ENCODE measurements at regions of chr15 and their contacts with region 1.

Region 1: DNA sequence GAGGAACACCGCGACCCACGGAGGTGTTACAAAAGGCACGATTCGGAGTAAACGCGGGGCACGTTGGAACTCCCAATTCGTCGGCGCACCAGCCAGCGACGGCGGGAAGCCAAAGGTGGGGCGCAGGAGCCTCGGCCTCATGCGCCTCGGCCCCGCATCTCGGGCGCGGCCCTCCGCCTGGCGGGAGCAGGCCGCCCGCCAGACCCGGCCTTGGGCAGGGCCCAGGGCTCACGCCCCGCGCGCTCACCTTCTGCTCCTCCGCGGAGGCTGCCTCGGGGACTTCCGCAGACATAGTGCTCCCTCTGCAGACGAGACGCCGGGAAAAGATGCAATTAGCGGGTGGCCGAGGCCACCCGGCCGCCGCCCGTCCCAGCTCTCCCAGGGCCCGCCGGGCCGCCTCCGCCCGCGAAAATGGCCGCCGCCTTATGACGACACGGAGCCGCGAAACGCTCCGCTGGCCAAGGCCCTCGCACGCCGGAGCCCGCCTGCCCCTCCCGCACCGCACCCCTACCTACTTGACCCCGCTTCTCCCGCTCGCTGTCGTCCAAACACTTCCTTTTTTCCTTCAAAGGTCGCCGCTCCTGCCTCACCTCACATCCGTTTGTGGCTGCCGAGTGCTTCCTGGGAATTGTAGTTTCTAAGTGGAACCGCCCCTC is at the start of gene ARPP19:
- DNase-seq: peak; percentile 97
- H3K4me3 ChIP-seq: peak within 1 kb of the TSS; percentile 61 to 85 (median 80)
- H3K27ac ChIP-seq: peak within 1 kb of the TSS; percentile 91 to 97 (median 96)
- H3K4me1 ChIP-seq: peaks cover 0 to 45% (median 41%) of the 10 kb centered on the region in 4 donors
- H3K27me3 ChIP-seq: no peaks in the 10 kb centered on the region
- CTCF ChIP-seq: no peak
- EP300 ChIP-seq: no peak
- POLR2A ChIP-seq: peak; percentile 38 to 80
- total RNA-seq, gene ARPP19: 110 to 177 (median 150) TPM

Region 2: DNA sequence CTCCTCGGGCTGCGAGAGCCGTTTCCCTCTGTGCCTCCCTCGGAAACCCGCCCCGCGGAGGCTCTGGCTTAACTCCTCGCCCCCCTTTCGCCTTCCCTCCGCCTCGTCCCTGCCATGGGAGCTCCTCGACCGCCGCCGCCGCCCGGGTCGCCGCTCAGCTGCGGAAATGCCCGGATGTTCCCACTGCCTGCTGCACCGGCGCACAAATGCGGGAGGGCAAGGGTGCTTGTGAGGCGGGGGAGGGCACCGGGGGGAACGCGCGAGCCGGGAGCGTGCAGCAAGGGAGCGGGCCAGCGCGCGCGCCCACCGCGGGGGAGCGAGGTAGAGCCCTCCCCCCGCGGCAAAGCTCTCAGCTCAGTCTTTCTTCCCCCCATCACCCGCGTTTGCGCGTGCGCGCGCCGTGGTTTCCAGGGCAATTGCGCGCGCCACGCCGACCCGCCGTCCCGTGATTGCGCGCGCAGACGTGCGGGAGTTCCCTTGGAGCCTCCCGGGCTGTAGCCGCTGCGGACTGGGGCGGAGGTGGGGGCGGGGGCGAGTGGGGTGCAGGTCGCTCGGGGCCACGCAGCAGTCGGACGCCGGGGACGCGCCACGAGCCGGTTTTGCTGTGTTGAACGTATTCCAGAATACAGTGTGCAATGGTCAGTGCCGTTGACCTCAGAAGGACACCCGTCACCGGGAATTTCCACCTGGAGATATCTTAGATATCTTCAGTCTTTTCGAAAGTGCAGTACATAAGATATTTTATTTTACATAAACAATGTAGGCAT is 945.9 kb before region 1 on chr15 and contains the start of gene DMXL2:
- intact Hi-C with region 1: loop called (anchors 5 kb)
- DNase-seq: peak; percentile 93
- H3K4me3 ChIP-seq: peak within 1 kb of the TSS; percentile 60 to 79 (median 72)
- H3K27ac ChIP-seq: peak within 1 kb of the TSS; percentile 84 to 91 (median 84)
- H3K4me1 ChIP-seq: peaks cover 0 to 18% (median 15%) of the 10 kb centered on the region in 4 donors
- H3K27me3 ChIP-seq: no peaks in the 10 kb centered on the region
- CTCF ChIP-seq: no peak
- EP300 ChIP-seq: no peak
- POLR2A ChIP-seq: no peak
- total RNA-seq, gene DMXL2: 34.6 to 64.5 (median 50.5) TPM

Region 3: GRCh38 chr15:52261498-52262242 is 307.1 kb before region 1 on chr15:
- intact Hi-C with region 1: loop called (anchors 5 kb)
- DNase-seq: peak; percentile 73
- H3K4me3 ChIP-seq: no peak overlapping the region
- H3K27ac ChIP-seq: peak overlapping the region; percentile 44 to 81 (median 52)
- H3K4me1 ChIP-seq: peaks cover 2 to 15% (median 13%) of the 10 kb centered on the region in 4 donors
- H3K27me3 ChIP-seq: no peaks in the 10 kb centered on the region
- CTCF ChIP-seq: peak in 1 of 4 experiments; percentile 22
- EP300 ChIP-seq: no peak
- POLR2A ChIP-seq: no peak

Region 4: GRCh38 chr15:52509500-52510245 is 59.1 kb before region 1 on chr15:
- intact Hi-C with region 1: no loop called
- DNase-seq: no peak
- H3K4me3 ChIP-seq: no peak overlapping the region
- H3K27ac ChIP-seq: no peak overlapping the region
- H3K4me1 ChIP-seq: peaks cover 0 to 25% (median 11%) of the 10 kb centered on the region in 4 donors
- H3K27me3 ChIP-seq: no peaks in the 10 kb centered on the region
- CTCF ChIP-seq: no peak
- EP300 ChIP-seq: no peak
- POLR2A ChIP-seq: no peak

Region 5: GRCh38 chr15:52528991-52529926 is 39.5 kb before region 1 on chr15:
- intact Hi-C with region 1: loop called (anchors 2 kb)
- DNase-seq: peak; percentile 84
- H3K4me3 ChIP-seq: peak overlapping the region; percentile 36 to 91 (median 78)
- H3K27ac ChIP-seq: peak overlapping the region; percentile 83 to 89 (median 88)
- H3K4me1 ChIP-seq: peaks cover 0 to 20% (median 9%) of the 10 kb centered on the region in 4 donors
- H3K27me3 ChIP-seq: no peaks in the 10 kb centered on the region
- CTCF ChIP-seq: no peak
- EP300 ChIP-seq: no peak
- POLR2A ChIP-seq: no peak

Region 6: GRCh38 chr15:52679232-52680040 is 110.7 kb after region 1 on chr15 and contains the start of gene ATOSA:
- intact Hi-C with region 1: loop called (anchors 1 kb)
- DNase-seq: peak; percentile 96
- H3K4me3 ChIP-seq: peak within 1 kb of the TSS; percentile 66 to 98 (median 93)
- H3K27ac ChIP-seq: peak within 1 kb of the TSS; percentile 89 to 100 (median 98)
- H3K4me1 ChIP-seq: peaks cover 0 to 44% (median 36%) of the 10 kb centered on the region in 4 donors
- H3K27me3 ChIP-seq: no peaks in the 10 kb centered on the region
- CTCF ChIP-seq: no peak
- EP300 ChIP-seq: no peak
- POLR2A ChIP-seq: peak; percentile 55
- total RNA-seq, gene ATOSA: 50.1 to 90.3 (median 82.2) TPM

Measured in sigmoid colon (tissue), 7 donors.